ENCODE measurements at regions of chr19 and their contacts with region 1.

Region 1: GRCh38 chr19:55117636-55118391 is at the start of gene PPP1R12C:
- DNase-seq: peak; percentile 96
- H3K4me3 Mint-ChIP-seq: peak within 1 kb of the TSS; percentile 98
- H3K27ac Mint-ChIP-seq: peak within 1 kb of the TSS; percentile 95
- H3K4me1 Mint-ChIP-seq: peaks cover 28% of the 10 kb centered on the region
- H3K27me3 Mint-ChIP-seq: peaks cover 4% of the 10 kb centered on the region
- total RNA-seq, gene PPP1R12C: 114 and 115 TPM in 2 replicates

Region 2: GRCh38 chr19:55005684-55006488 is 111.9 kb before region 1 on chr19:
- intact Hi-C with region 1: loop called (anchors 2 kb)
- DNase-seq: peak; percentile 59
- H3K4me3 Mint-ChIP-seq: peak overlapping the region; percentile 81
- H3K27ac Mint-ChIP-seq: peak overlapping the region; percentile 92
- H3K4me1 Mint-ChIP-seq: peaks cover 7% of the 10 kb centered on the region
- H3K27me3 Mint-ChIP-seq: peaks cover 2% of the 10 kb centered on the region

Region 3: GRCh38 chr19:55088543-55089341 is 29.1 kb before region 1 on chr19:
- intact Hi-C with region 1: loop called (anchors 2 kb)
- DNase-seq: peak; percentile 62
- H3K4me3 Mint-ChIP-seq: peak overlapping the region; percentile 49
- H3K27ac Mint-ChIP-seq: no peak overlapping the region
- H3K4me1 Mint-ChIP-seq: peaks cover 16% of the 10 kb centered on the region
- H3K27me3 Mint-ChIP-seq: peaks cover 29% of the 10 kb centered on the region

Region 4: DNA sequence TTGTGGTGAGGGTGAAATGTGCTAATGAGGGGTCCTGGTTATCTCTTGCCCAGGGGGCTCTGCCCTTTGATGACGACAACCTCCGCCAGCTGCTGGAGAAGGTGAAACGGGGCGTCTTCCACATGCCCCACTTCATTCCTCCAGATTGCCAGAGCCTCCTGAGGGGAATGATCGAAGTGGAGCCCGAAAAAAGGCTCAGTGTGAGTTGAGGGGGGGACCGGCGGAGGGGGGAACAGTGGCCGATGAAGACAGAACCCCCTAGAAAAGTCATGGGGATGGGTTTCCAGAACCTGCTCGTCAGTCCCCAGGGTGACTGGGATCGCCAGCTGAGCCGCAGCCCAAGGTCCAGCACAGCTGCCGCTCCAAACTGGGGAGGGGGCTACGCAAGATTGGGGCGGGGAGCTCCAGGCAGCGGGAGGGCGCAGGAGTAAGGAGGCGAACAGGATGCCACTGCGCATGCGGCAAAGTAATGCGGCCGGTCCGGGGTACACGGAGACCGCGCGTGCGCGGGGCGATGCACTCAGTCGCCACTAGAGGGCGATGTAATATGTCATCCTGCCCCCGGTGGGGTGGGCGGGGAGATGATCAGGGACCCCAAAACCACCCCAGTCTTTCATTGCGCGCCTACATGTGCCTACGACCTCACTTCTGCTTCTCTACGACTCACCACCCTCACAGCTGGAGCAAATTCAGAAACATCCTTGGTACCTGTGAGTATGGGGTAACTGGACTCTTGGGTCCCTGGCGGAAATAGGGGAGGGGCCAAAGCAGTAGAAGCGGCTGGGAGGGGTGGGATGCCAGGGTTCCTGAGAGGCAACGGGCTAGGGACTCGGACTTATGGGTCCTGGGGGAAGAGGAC is 183.9 kb after region 1 on chr19:
- intact Hi-C with region 1: loop called (anchors 10 kb)
- DNase-seq: peak; percentile 91
- H3K4me3 Mint-ChIP-seq: peak overlapping the region; percentile 88
- H3K27ac Mint-ChIP-seq: peak overlapping the region; percentile 88
- H3K4me1 Mint-ChIP-seq: peaks cover 17% of the 10 kb centered on the region
- H3K27me3 Mint-ChIP-seq: no peaks in the 10 kb centered on the region

Region 5: GRCh38 chr19:55319785-55320184 is 202.0 kb after region 1 on chr19:
- intact Hi-C with region 1: no loop called
- DNase-seq: no peak
- H3K4me3 Mint-ChIP-seq: no peak overlapping the region
- H3K27ac Mint-ChIP-seq: no peak overlapping the region
- H3K4me1 Mint-ChIP-seq: peaks cover 3% of the 10 kb centered on the region
- H3K27me3 Mint-ChIP-seq: peaks cover 2% of the 10 kb centered on the region

Region 6: DNA sequence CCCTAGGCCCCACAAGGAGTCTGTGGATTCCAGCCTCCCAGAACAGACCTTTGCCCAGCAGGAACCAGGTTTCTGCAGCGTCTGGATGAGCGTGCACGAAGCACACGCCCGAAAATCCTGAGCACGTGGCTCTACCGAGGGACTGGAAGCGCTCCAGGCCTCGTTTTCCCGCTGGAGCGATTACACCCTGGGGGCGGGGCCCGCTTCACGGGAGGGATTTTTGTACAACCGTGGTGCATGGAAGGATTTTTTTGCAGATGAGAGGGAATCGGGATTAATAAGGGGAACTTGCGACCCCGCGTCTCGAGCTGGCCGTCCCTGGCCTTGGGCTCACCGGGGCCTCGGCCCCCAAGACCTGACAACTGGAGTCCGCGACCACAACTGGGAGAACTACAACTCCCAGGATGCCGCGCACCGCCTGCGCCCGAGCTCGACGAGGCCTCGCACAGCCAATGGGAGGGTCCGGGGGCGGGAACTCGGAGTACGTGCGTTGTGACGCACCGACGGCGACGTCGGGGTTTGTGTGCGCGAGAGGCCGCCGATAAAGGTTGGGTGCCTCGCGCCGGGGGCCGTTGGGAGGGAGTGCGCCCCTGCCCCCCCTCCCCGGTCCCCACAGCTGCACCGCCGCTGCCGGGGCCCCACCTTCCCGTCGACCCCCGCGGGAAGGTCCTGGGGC is 358.4 kb after region 1 on chr19 and contains the start of gene ZNF628:
- intact Hi-C with region 1: loop called (anchors 1 kb)
- DNase-seq: peak; percentile 96
- H3K4me3 Mint-ChIP-seq: peak within 1 kb of the TSS; percentile 91
- H3K27ac Mint-ChIP-seq: peak within 1 kb of the TSS; percentile 79
- H3K4me1 Mint-ChIP-seq: peaks cover 18% of the 10 kb centered on the region
- H3K27me3 Mint-ChIP-seq: peaks cover 2% of the 10 kb centered on the region
- total RNA-seq, gene ZNF628: 7.6 and 10.4 TPM in 2 replicates

Region 7: GRCh38 chr19:56121180-56122167 is 1003.7 kb after region 1 on chr19 and contains the start of gene ZNF787:
- intact Hi-C with region 1: loop called (anchors 5 kb)
- DNase-seq: peak; percentile 97
- H3K4me3 Mint-ChIP-seq: peak within 1 kb of the TSS; percentile 89
- H3K27ac Mint-ChIP-seq: peak within 1 kb of the TSS; percentile 97
- H3K4me1 Mint-ChIP-seq: peaks cover 28% of the 10 kb centered on the region
- H3K27me3 Mint-ChIP-seq: no peaks in the 10 kb centered on the region
- total RNA-seq, gene ZNF787: 41.8 and 42.6 TPM in 2 replicates

Measured in activated T-helper 1 cell treated with anti-CD3 and anti-CD28 coated beads, Interleukin-12 subunit alpha, Interleukin-12 subunit beta, Interleukin-2, Interleukin-4 antibody, amounts not matched to agents 30 ng/mL and 10 ng/mL and 1 ng/mL, durations not matched to agents 14 hours and 24 hours and 36 hours (primary cell).